ENCODE measurements at regions of chr9 and their contacts with region 1.

Region 1: GRCh38 chr9:78314953-78315870 is 18.3 kb downstream of the PSAT1 start:
- DNase-seq: peak in 1 of 2 experiments; percentile 35
- H3K4me3 ChIP-seq: no peak overlapping the region
- H3K27ac ChIP-seq: no peak overlapping the region; the same call in 1 of the 2 replicates
- H3K4me1 ChIP-seq: no peaks in the 10 kb centered on the region
- H3K27me3 ChIP-seq: no peaks in the 10 kb centered on the region
- CTCF ChIP-seq: no peak
- EP300 ChIP-seq: no peak
- POLR2A ChIP-seq: peak in 1 of 2 experiments; percentile 28; a peak in 1 of 3 replicates
- RAD21 ChIP-seq: no peak

Region 2: DNA sequence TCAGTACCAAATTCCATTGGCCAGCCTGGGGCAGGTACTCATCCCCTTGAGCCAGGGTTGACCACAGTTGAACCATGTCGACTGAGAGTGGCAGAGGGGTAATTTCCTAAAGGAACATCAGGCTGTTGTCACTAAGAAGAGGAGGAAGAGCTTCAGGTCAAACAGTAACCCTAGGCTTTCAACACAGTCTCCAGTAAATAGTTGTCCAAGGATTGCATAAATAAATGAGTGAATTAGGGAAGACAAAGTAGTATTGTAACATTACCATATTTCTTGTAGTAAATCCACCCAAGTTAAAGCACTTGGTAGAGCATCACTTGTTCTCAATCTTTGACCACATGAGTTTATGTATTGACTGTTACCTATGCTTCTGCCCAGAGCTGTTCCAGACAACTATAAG is 10.9 kb before region 1 on chr9:
- CTCF ChIA-PET with region 1: interaction called, 13 read pairs
- POLR2A ChIA-PET with region 1: interaction called, 936 read pairs
- DNase-seq: no peak
- H3K4me3 ChIP-seq: no peak overlapping the region
- H3K27ac ChIP-seq: no peak overlapping the region
- H3K4me1 ChIP-seq: no peaks in the 10 kb centered on the region; a peak in 1 of 7 replicates
- H3K27me3 ChIP-seq: no peaks in the 10 kb centered on the region
- CTCF ChIP-seq: no peak
- EP300 ChIP-seq: no peak
- POLR2A ChIP-seq: peak in 1 of 2 experiments; percentile 16; a peak in 1 of 3 replicates
- RAD21 ChIP-seq: no peak

Region 3: GRCh38 chr9:78325343-78325742 is 10.1 kb after region 1 on chr9:
- CTCF ChIA-PET with region 1: interaction called, 4 read pairs
- POLR2A ChIA-PET with region 1: interaction called, 520 read pairs
- DNase-seq: no peak
- H3K4me3 ChIP-seq: no peak overlapping the region
- H3K27ac ChIP-seq: no peak overlapping the region
- H3K4me1 ChIP-seq: peaks cover 0 to 2% (median 0%) of the 10 kb centered on the region in 4 experiments; a peak in 2 of 7 replicates
- H3K27me3 ChIP-seq: no peaks in the 10 kb centered on the region
- CTCF ChIP-seq: no peak
- EP300 ChIP-seq: no peak
- POLR2A ChIP-seq: peak in 1 of 2 experiments; percentile 47; a peak in 2 of 3 replicates
- RAD21 ChIP-seq: no peak

Region 4: DNA sequence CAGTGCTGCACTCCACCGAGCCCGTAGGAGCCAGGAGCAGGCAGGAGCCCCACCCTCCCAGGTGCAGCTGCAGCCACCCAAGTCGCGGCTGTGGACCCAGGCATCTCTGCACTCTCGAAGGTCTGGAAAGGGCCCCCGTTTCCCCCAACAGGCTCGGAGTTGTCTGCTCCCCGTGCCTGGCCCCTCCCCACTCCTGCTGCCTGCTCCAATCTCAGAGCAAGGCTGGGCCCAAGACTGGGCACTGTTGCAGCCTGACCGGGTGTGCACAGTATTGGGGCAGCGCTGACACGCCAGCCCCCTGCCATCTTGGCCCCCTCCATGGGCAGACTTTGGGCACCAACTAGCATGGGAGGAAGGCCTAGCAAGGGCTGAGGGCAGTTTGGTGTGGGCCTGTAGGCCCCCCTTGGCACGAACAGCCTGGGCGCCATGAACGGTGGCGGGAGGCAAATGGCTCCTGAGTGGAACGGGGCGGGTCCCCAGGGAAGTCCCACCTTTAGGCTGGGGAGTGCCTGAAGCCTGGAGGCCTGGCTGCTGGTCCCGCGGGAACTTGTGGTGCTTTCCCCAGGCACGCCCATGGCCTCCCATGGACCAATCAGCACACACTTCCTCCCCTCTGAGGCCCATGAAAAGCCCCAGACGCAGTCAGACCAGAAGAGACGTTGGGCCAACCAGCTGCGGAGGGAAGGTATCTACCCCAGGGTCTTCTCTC is 42.1 kb after region 1 on chr9:
- CTCF ChIA-PET with region 1: no interaction called
- POLR2A ChIA-PET with region 1: interaction called, 12 read pairs
- DNase-seq: no peak
- H3K4me3 ChIP-seq: no peak overlapping the region
- H3K27ac ChIP-seq: no peak overlapping the region; the same call in 1 of the 2 replicates
- H3K4me1 ChIP-seq: no peaks in the 10 kb centered on the region
- H3K27me3 ChIP-seq: no peaks in the 10 kb centered on the region
- CTCF ChIP-seq: no peak
- EP300 ChIP-seq: no peak
- POLR2A ChIP-seq: no peak
- RAD21 ChIP-seq: no peak